ENCODE measurements at regions of chr1 and their contacts with region 1.

Region 1: GRCh38 chr1:179121159-179121938 is 39.5 kb downstream of the TOR3A start:
- DNase-seq: no peak
- H3K4me3 ChIP-seq: no peak overlapping the region
- H3K27me3 ChIP-seq: no peaks in the 10 kb centered on the region
- CTCF ChIP-seq: peak; percentile 62

Region 2: GRCh38 chr1:179105350-179105749 is 16.0 kb before region 1 on chr1:
- CTCF ChIA-PET with region 1: interaction called, 18 read pairs
- POLR2A ChIA-PET with region 1: no interaction called
- DNase-seq: no peak
- H3K4me3 ChIP-seq: no peak overlapping the region
- H3K27me3 ChIP-seq: no peaks in the 10 kb centered on the region
- CTCF ChIP-seq: peak; percentile 31; the same call in 1 of the 2 replicates

Region 3: GRCh38 chr1:179194068-179194537 is 72.8 kb after region 1 on chr1:
- CTCF ChIA-PET with region 1: interaction called, 32 read pairs
- POLR2A ChIA-PET with region 1: no interaction called
- DNase-seq: no peak
- H3K4me3 ChIP-seq: no peak overlapping the region
- H3K27me3 ChIP-seq: no peaks in the 10 kb centered on the region
- CTCF ChIP-seq: no peak

Measured in BJ (cell line).